ENCODE measurements at regions of chr12 and their contacts with region 1.

Region 1: GRCh38 chr12:10175846-10176636 is 2.8 kb upstream of the TMEM52B start:
- DNase-seq: peak; percentile 93
- H3K4me3 ChIP-seq: peak overlapping the region in 1 of 3 experiments; percentile 5
- H3K27ac ChIP-seq: peak overlapping the region; percentile 92
- H3K4me1 ChIP-seq: peaks cover 35% of the 10 kb centered on the region
- H3K27me3 ChIP-seq: no peaks in the 10 kb centered on the region
- CTCF ChIP-seq: peak in 1 of 2 donors; percentile 30

Region 2: DNA sequence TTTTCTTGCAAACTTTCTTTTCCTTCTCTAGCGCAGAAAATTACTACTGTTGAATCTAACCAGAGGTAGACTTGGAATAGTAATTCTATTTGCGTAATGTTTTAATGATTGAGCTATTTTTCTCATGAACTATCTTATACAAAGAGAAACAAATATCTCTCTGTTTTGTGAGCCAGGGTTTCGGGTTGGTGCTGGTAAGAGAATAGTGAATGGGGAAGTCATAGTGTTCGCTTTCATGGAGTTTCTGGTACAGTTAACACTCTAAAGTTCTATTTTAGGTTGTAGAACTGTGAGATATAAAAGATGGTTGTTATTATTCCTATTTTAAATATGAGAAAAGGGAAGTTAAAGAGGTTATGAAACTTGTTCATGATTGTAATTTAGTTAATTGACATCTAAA is 183.7 kb before region 1 on chr12:
- CTCF ChIA-PET with region 1: no interaction called
- dilution Hi-C with region 1: no loop called
- in situ Hi-C with region 1: no loop called
- intact Hi-C with region 1: no loop called
- DNase-seq: no peak
- H3K4me3 ChIP-seq: no peak overlapping the region
- H3K27ac ChIP-seq: no peak overlapping the region
- H3K4me1 ChIP-seq: no peaks in the 10 kb centered on the region
- H3K27me3 ChIP-seq: peaks cover 11% of the 10 kb centered on the region
- CTCF ChIP-seq: no peak

Region 3: GRCh38 chr12:10190558-10191388 is 14.7 kb after region 1 on chr12:
- CTCF ChIA-PET with region 1: interaction called, 3 read pairs
- dilution Hi-C with region 1: no loop called
- in situ Hi-C with region 1: no loop called
- intact Hi-C with region 1: loop called (anchors 1 kb)
- DNase-seq: peak; percentile 60
- H3K4me3 ChIP-seq: no peak overlapping the region
- H3K27ac ChIP-seq: no peak overlapping the region
- H3K4me1 ChIP-seq: peaks cover 18% of the 10 kb centered on the region
- H3K27me3 ChIP-seq: no peaks in the 10 kb centered on the region
- CTCF ChIP-seq: peak; percentile 85 to 97

Region 4: DNA sequence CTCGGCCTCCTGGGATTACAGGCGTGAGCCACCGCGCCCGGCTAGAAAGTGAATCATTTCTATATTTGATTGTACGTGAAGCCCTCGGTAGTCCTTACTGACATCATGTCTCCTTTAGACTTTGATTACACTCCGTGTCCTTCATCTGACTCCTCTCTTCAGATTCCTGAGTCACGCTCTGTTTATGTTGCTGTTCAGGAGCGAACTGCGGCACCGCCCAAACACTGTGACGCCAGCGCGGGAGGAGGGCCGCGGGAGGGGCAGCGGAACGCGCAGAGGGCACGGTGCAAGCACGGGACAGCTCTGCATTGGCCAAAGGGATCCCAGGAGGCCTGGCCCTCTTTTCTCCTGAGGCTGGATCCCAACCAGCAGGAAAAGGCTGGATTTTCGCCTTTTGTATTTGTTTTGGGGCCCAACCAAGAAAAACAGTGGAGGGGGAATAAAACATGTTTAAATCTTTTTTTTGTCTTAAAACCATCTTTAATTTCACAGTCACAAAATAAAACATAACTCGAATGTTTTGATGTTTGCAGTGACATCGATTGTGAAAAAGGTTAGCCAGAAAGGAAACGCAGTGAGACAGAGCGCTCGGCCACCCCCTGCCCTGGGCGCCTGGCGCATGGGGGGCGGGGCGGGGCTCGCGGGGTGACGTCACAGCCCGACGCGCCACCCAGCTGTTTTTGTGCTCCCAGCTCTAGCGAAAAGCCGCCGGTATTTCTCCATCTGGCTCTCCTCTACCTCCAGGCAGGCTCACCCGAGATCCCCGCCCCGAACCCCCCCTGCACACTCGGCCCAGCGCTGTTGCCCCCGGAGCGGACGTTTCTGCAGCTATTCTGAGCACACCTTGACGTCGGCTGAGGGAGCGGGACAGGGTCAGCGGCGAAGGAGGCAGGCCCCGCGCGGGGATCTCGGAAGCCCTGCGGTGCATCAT is 36.4 kb after region 1 on chr12 and contains the start of gene GABARAPL1:
- CTCF ChIA-PET with region 1: no interaction called
- dilution Hi-C with region 1: no loop called
- in situ Hi-C with region 1: no loop called
- intact Hi-C with region 1: loop called (anchors 1 kb)
- DNase-seq: peak; percentile 99
- H3K4me3 ChIP-seq: peak within 1 kb of the TSS; percentile 67 to 99 (median 70)
- H3K27ac ChIP-seq: peak within 1 kb of the TSS; percentile 99
- H3K4me1 ChIP-seq: peaks cover 19% of the 10 kb centered on the region
- H3K27me3 ChIP-seq: no peaks in the 10 kb centered on the region
- CTCF ChIP-seq: no peak
- total RNA-seq, gene GABARAPL1: 18.6 to 55.0 TPM

Measured in mammary epithelial cell (primary cell).